K562 (cell line): ENCODE measurements at regions of chr2 and their contacts with region 1.

Region 1: GRCh38 chr2:48420512-48421197 is 109.3 kb upstream of the STON1 start:
- DNase-seq: peak; percentile 85 to 92 (median 86)
- ATAC-seq: peak; percentile 95
- H3K4me3 ChIP-seq: no peak overlapping the region
- H3K27ac ChIP-seq: no peak overlapping the region
- H3K4me1 ChIP-seq: peaks cover 0 to 8% of the 10 kb centered on the region in 2 experiments; a peak in 4 of 5 replicates
- H3K27me3 ChIP-seq: no peaks in the 10 kb centered on the region
- CTCF ChIP-seq: peak; percentile 99
- EP300 ChIP-seq: 0 out of 2 replicates have a peak, but pooled peaks have one; percentile 37
- POLR2A ChIP-seq: no peak
- RAD21 ChIP-seq: peak; percentile 99

Region 2: GRCh38 chr2:47850198-47850597 is 570.5 kb before region 1 on chr2:
- CTCF ChIA-PET with region 1: interaction called, 3 read pairs
- POLR2A ChIA-PET with region 1: no interaction called
- in situ Hi-C with region 1: loop called (anchors 25 kb)
- intact Hi-C with region 1: loop called (anchors 10 kb)
- DNase-seq: no peak
- ATAC-seq: no peak; the same call in 2 of the 3 replicates
- H3K4me3 ChIP-seq: no peak overlapping the region
- H3K27ac ChIP-seq: no peak overlapping the region
- H3K4me1 ChIP-seq: no peaks in the 10 kb centered on the region
- H3K27me3 ChIP-seq: no peaks in the 10 kb centered on the region
- CTCF ChIP-seq: no peak
- EP300 ChIP-seq: no peak
- POLR2A ChIP-seq: no peak
- RAD21 ChIP-seq: no peak

Region 3: GRCh38 chr2:47867205-47867604 is 553.5 kb before region 1 on chr2:
- CTCF ChIA-PET with region 1: no interaction called
- POLR2A ChIA-PET with region 1: no interaction called
- in situ Hi-C with region 1: loop called (anchors 25 kb)
- intact Hi-C with region 1: no loop called
- DNase-seq: peak in 1 of 4 experiments; percentile 18
- ATAC-seq: no peak
- H3K4me3 ChIP-seq: no peak overlapping the region
- H3K27ac ChIP-seq: no peak overlapping the region
- H3K4me1 ChIP-seq: peaks cover 4 to 11% of the 10 kb centered on the region in 2 experiments; a peak in 4 of 5 replicates
- H3K27me3 ChIP-seq: no peaks in the 10 kb centered on the region
- CTCF ChIP-seq: no peak
- EP300 ChIP-seq: no peak
- POLR2A ChIP-seq: no peak
- RAD21 ChIP-seq: no peak

Region 4: DNA sequence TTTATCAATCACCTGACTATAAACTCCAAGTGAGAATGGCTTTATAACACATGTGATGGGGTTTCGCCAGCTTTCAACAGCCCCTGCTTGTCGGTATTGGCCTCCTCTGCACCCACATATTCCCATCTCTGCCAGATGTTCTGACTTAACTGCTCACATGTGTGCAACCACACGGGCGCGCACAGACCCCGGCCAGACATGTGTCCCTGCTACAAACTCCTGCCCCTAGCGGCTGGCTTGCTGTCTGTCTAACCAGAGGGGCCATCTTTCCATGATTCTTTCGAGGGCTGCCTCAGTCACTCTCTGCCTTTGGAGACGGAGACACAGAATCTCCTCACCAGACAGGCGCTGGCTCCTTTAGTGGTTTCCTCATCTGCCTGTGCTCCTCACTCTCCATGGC is 124.6 kb after region 1 on chr2:
- CTCF ChIA-PET with region 1: no interaction called
- POLR2A ChIA-PET with region 1: no interaction called
- in situ Hi-C with region 1: no loop called
- intact Hi-C with region 1: no loop called
- DNase-seq: peak; percentile 68 to 86 (median 72)
- ATAC-seq: peak; percentile 99
- H3K4me3 ChIP-seq: no peak overlapping the region
- H3K27ac ChIP-seq: no peak overlapping the region
- H3K4me1 ChIP-seq: 0 out of 5 replicates have a peak, but pooled peaks cover 0 to 4% of the 10 kb centered on the region in 2 experiments
- H3K27me3 ChIP-seq: no peaks in the 10 kb centered on the region
- CTCF ChIP-seq: peak; percentile 95 to 100 (median 99)
- EP300 ChIP-seq: no peak
- POLR2A ChIP-seq: no peak
- RAD21 ChIP-seq: peak; percentile 38 to 81